CD14-positive monocyte (primary cell): ENCODE measurements at regions of chr1 and their contacts with region 1.

Region 1: DNA sequence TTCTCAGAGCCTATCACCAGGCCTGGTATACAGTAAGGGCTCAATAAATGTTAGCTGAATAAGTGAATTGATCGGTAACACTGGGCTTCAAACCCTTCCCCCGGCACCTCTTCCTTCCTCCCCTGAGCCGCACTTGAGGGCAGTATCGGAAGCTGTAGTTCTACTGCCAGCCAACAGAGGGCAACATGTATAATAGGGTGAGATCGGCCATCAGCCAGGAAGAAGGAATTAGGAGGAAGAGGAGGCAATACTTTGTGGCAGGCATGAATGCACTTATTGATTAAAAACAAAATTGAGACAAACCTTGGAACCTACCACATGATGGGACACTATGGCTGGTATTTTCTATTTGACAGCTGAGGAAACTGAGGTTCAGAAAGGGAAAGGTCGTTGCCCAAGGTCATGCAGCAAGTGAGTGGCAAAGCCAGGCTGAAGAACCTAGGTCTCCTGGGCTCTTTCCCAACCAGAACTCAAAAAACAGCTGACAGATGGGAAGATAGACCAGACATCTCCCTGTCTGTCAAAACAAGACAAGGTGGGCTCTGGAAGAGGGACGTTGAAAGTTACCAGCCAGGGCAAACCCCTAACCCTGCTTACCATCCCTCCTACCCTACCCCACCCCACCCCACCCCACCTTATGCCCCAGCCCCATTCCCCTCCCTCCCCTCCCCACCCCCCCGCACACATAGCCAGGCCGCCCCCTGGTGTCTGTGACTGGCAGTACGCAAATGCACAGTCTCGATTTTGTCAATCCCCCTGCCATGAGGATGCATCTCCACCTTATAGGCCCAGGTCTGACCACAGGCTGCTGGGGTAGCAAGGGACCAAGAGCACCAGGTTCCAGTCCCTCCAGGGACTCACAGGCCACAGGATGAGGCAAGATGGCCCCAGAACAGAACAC is 107.3 kb upstream of the RUNX3 start:
- DNase-seq: peak in 2 of 3 donors; percentile 78 to 81
- H3K4me3 ChIP-seq: no peak overlapping the region
- H3K4me3 Mint-ChIP-seq: no peak overlapping the region
- H3K27ac ChIP-seq: peak overlapping the region in 1 of 2 donors; percentile 55
- H3K27ac Mint-ChIP-seq: peak overlapping the region in 6 of 7 donors; percentile 43 to 88 (median 73)
- H3K4me1 ChIP-seq: peaks cover 43 to 48% of the 10 kb centered on the region in 2 donors
- H3K4me1 Mint-ChIP-seq: peaks cover 10% of the 10 kb centered on the region
- H3K27me3 ChIP-seq: peaks cover 0 to 4% of the 10 kb centered on the region in 2 donors
- H3K27me3 Mint-ChIP-seq: peaks cover 11 to 23% (median 17%) of the 10 kb centered on the region in 3 donors
- CTCF ChIP-seq: peak; percentile 90

Region 2: GRCh38 chr1:24872061-24872850 is 165.2 kb before region 1 on chr1:
- intact Hi-C with region 1: no loop called
- DNase-seq: peak; percentile 45 to 64 (median 57)
- H3K4me3 ChIP-seq: peak overlapping the region in 1 of 3 experiments; percentile 42
- H3K4me3 Mint-ChIP-seq: peak overlapping the region; percentile 27 to 76
- H3K27ac ChIP-seq: no peak overlapping the region
- H3K27ac Mint-ChIP-seq: peak overlapping the region in 2 of 7 donors; percentile 46 to 50
- H3K4me1 ChIP-seq: peaks cover 33% of the 10 kb centered on the region in 2 donors
- H3K4me1 Mint-ChIP-seq: peaks cover 35% of the 10 kb centered on the region
- H3K27me3 ChIP-seq: peaks cover 0 to 17% of the 10 kb centered on the region in 2 donors
- H3K27me3 Mint-ChIP-seq: peaks cover 29 to 44% (median 35%) of the 10 kb centered on the region in 3 donors
- CTCF ChIP-seq: no peak

Region 3: DNA sequence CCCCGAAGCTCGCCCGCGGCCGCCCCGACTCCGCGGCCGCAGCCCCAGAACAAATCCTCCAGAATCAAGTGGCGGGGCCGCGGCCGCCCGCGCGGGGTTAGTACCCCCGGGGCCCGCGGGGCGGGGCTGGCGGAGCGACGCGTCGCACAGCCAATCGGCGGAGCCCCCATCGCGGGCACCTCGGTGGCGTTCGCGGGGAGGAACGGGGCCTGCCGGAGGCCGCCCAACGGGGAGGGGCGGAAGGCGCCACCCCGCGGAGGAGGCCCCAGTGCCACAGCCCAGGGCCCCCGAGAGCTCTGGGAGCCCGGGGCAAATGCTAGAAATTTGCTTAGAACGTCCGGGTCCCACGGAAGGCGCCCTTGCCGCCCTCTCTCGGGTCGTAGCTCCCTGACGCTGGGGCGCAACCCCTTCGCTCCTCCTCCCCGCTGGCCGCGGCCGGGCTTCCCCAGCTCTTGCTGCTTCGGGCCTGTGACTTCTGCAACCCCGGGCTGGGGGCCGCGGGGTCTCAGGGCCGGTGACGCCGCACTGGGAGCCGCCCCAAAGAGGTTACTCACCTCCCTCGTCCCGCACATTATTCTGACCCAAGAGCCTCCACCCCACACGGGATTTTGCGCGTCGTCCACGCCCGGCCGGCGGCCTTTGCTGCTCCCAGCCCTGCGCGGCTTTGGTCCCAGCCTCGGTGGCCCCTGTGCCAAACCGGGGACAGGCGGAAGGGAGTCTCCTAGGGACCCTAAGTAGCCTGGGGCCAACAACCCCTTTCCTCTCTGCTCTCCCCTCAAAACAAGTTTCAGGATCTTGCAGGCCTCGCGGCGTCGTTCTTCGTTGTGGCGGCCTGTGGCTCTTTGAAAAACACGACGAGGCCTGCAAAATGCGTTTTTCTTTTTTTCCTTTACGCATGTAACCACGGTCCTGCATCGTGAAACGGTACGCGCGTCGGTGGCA is 106.9 kb before region 1 on chr1 and contains the start of gene RUNX3:
- intact Hi-C with region 1: loop called (anchors 2 to 5 kb)
- DNase-seq: peak; percentile 78 to 85 (median 83)
- H3K4me3 ChIP-seq: peak within 1 kb of the TSS; percentile 68 to 85 (median 69)
- H3K4me3 Mint-ChIP-seq: peak within 1 kb of the TSS; percentile 93
- H3K27ac ChIP-seq: peak within 1 kb of the TSS; percentile 47 to 81
- H3K27ac Mint-ChIP-seq: peak within 1 kb of the TSS; percentile 84 to 93 (median 89)
- H3K4me1 ChIP-seq: peaks cover 39 to 57% of the 10 kb centered on the region in 2 donors
- H3K4me1 Mint-ChIP-seq: peaks cover 35% of the 10 kb centered on the region
- H3K27me3 ChIP-seq: peaks cover 0 to 59% of the 10 kb centered on the region in 2 donors
- H3K27me3 Mint-ChIP-seq: peaks cover 26 to 69% (median 68%) of the 10 kb centered on the region in 3 donors
- CTCF ChIP-seq: peak; percentile 30
- polyA plus RNA-seq, gene RUNX3: 4.4 to 27.9 (median 6.7) TPM

Region 4: DNA sequence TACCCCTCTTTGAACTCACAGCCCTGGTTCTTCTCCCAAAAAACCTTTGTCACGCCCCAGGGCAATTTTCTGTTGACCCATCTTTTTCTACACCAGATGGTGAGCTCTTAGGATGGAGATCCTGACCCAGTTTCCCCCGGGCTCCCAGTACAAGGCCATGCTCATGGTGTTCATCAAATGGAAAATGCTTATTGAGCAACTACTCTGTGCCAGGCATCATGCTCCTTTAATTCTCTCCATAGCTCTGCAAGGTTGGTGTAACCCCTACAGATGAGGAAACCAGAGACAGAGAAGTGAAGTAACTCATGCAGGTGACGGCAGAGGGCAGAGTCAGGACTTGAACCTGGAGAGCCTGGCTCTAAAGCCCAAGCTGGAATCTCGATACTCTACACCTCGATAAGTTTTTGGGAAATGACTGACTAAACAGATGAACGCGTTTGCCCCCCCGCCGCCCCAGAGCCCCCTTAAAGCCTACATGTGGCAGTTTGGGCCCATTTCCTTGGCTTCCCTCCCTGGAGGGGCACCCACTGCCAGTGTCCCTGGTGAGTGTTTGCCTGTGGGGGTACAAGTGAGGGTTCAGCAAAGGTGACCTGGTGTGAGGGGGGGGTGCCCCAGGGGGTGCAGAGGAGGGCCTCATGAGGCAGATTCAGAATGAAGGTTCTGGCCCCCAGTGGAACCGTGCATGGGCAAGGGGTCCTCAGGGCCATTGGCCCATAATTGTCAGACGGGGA is 77.2 kb before region 1 on chr1:
- intact Hi-C with region 1: no loop called
- DNase-seq: no peak
- H3K4me3 ChIP-seq: no peak overlapping the region
- H3K4me3 Mint-ChIP-seq: no peak overlapping the region
- H3K27ac ChIP-seq: no peak overlapping the region
- H3K27ac Mint-ChIP-seq: peak overlapping the region in 1 of 7 donors; percentile 34
- H3K4me1 ChIP-seq: peaks cover 49 to 51% of the 10 kb centered on the region in 2 donors
- H3K4me1 Mint-ChIP-seq: peaks cover 44% of the 10 kb centered on the region
- H3K27me3 ChIP-seq: no peaks in the 10 kb centered on the region
- H3K27me3 Mint-ChIP-seq: peaks cover 2 to 14% (median 6%) of the 10 kb centered on the region in 3 donors
- CTCF ChIP-seq: no peak

Region 5: DNA sequence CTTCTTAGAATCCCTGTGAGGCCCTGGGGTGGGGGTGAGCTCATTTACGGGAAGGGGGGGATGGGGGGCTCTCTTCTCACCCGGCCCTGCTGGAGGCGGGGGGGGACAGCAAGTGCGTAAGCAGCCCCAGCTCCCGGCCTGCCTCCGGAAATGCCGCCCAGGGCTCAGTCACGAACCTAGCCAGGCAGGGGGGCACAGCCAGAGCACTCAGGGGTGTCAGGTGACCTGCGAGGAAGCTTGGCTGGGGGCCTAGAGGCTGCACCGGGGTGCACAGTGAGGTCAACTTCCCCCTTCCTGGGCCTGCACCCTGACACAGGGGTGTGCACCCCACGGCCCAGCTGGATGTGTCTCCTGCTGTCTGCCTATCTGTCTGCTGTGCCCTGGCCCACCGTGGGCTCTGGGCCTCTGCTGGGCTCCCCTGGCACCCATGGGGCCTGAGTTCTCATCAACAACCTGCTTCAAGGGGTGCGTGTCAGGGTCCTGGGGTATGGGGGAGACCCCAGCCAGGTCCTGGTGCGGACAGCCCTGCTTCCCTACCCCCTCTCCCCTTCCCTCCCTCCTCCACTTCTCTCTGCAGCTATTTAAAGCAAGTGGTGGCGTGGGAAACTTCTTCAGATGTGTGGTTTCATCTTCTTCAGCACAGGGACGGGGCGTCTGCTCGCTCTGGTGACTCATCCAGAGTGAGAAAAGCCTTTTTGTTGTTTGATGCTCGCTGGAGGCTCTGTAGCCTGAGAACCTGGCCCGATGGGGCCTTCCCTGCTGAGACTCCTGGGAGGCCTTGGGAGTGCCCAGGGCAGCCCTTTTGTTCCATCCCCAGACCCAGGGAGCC is 14.8 kb before region 1 on chr1:
- intact Hi-C with region 1: loop called in 1 of 2 experiments (anchors 2 kb)
- DNase-seq: peak; percentile 99 to 100 (median 100)
- H3K4me3 ChIP-seq: peak overlapping the region in 2 of 3 experiments; percentile 15 to 49
- H3K4me3 Mint-ChIP-seq: peak overlapping the region; percentile 69 to 84
- H3K27ac ChIP-seq: peak overlapping the region; percentile 90 to 99
- H3K27ac Mint-ChIP-seq: peak overlapping the region; percentile 97 to 99 (median 98)
- H3K4me1 ChIP-seq: peaks cover 66 to 72% of the 10 kb centered on the region in 2 donors
- H3K4me1 Mint-ChIP-seq: peaks cover 74% of the 10 kb centered on the region
- H3K27me3 ChIP-seq: peaks cover 0 to 17% of the 10 kb centered on the region in 2 donors
- H3K27me3 Mint-ChIP-seq: peaks cover 18 to 41% (median 30%) of the 10 kb centered on the region in 3 donors
- CTCF ChIP-seq: no peak

Region 6: GRCh38 chr1:25068829-25069228 is 31.4 kb after region 1 on chr1:
- intact Hi-C with region 1: no loop called
- DNase-seq: no peak
- H3K4me3 ChIP-seq: no peak overlapping the region
- H3K4me3 Mint-ChIP-seq: no peak overlapping the region
- H3K27ac ChIP-seq: no peak overlapping the region
- H3K27ac Mint-ChIP-seq: peak overlapping the region in 1 of 7 donors; percentile 71
- H3K4me1 ChIP-seq: peaks cover 0 to 3% of the 10 kb centered on the region in 2 donors
- H3K4me1 Mint-ChIP-seq: peaks cover 19% of the 10 kb centered on the region
- H3K27me3 ChIP-seq: no peaks in the 10 kb centered on the region
- H3K27me3 Mint-ChIP-seq: peaks cover 1 to 10% (median 3%) of the 10 kb centered on the region in 3 donors
- CTCF ChIP-seq: peak; percentile 16